Activated T-helper 1 cell treated with anti-CD3 and anti-CD28 coated beads, Interleukin-12 subunit alpha, Interleukin-12 subunit beta, Interleukin-2, Interleukin-4 antibody, amounts not matched to agents 30 ng/mL and 10 ng/mL and 1 ng/mL, durations not matched to agents 14 hours and 24 hours and 36 hours (primary cell): ENCODE measurements at regions of chr1 and their contacts with region 1.

Region 1: DNA sequence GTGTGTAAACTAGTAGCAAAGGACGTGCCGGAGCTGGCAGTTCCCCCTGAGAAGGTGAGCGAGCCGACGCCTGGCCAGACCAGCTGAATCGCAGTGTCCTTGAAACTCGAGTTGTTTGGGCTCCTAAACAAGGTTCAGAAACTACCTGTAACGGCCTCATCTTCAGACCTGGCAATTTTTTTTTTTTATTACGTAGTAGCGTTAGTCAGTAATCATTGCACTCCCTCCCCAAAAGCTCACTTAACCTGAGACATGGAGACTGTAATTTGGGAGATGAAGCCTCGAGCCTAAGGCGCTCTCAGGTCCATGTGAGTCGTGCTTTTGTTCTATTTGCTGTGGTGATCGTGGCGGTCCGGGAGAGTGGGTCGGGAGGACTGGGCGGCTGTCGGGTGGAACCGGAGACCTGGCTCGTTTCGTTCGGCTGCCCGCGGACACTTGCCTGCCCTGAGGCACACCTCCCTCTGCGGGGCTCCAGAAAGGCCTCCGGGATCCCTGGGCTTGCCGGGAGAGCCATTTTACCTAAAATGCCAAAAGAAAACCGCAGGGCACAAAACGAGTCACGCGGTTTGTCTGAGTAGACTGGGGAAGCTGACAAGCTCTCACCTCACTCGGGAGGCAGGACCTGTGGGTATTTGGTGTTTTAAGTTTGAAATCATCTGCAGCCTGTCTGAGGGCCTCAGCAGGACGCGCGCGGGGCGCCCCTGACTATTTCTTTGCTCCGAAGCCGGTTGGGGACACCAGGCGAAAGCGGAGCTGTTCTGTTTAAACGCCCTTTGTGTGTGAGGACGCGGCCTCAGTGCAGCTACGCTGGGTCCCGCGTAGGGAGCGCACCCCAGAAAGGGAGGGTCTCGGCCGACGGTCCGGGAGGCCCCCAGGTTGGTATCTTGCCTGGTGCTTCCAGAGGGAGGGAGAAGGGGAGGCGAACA is 722 bp downstream of the LHX8 start:
- DNase-seq: no peak
- H3K4me3 Mint-ChIP-seq: peak overlapping the region; percentile 63
- H3K27ac Mint-ChIP-seq: no peak overlapping the region
- H3K4me1 Mint-ChIP-seq: peaks cover 15% of the 10 kb centered on the region
- H3K27me3 Mint-ChIP-seq: peaks cover 85% of the 10 kb centered on the region

Region 2: DNA sequence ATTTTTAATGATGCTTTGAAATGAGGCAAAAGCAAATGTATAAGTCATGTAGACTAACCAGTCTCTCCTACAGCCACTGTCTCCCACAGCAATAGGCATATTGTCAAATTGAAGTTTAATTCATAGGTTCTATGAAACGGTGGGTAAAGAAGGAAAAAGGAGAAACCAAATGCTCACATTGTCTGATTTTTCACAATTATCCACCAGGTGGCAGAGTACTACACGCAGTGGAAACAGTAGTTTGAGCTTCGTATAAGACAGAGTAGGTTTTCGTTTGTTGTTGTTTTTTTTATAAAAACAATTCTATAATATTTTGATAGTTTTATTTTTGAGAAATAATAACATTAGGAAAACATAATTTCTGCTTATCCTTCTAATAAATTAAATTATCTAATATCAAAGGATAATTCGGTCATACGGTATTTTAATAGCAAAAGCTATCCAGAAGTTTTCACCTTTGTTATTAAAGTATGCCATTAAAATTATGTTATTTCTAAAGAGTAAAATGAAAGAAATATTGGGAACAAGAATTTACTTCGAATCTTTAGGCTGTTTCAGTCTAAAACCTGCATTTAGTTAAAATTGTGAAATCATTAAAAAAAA is 362.9 kb before region 1 on chr1:
- intact Hi-C with region 1: loop called (anchors 10 kb)
- DNase-seq: no peak
- H3K4me3 Mint-ChIP-seq: no peak overlapping the region
- H3K27ac Mint-ChIP-seq: no peak overlapping the region
- H3K4me1 Mint-ChIP-seq: no peaks in the 10 kb centered on the region
- H3K27me3 Mint-ChIP-seq: no peaks in the 10 kb centered on the region

Region 3: DNA sequence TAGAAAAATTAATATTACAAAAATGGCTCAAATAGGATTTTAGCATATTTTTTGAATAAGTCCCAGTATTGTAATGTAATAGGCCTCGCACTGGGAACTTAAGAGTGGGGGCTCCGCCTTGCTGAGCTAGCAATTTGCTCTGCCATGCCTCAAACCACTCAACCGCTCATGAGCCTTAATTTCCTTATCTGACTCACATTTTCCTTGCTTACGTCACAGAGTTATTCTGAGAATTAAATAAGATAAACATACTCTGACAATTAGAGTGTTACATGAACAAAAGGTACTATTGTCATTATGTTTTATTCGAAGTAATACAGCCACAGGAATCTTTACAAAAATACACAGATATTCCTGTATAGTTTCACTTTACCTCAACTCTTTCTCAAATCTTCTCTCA is 367.9 kb after region 1 on chr1:
- intact Hi-C with region 1: no loop called
- DNase-seq: no peak
- H3K4me3 Mint-ChIP-seq: no peak overlapping the region
- H3K27ac Mint-ChIP-seq: no peak overlapping the region
- H3K4me1 Mint-ChIP-seq: no peaks in the 10 kb centered on the region
- H3K27me3 Mint-ChIP-seq: no peaks in the 10 kb centered on the region

Region 4: GRCh38 chr1:75615613-75616435 is 480.9 kb after region 1 on chr1:
- intact Hi-C with region 1: loop called (anchors 10 kb)
- DNase-seq: no peak
- H3K4me3 Mint-ChIP-seq: peak overlapping the region; percentile 41
- H3K27ac Mint-ChIP-seq: no peak overlapping the region
- H3K4me1 Mint-ChIP-seq: peaks cover 8% of the 10 kb centered on the region
- H3K27me3 Mint-ChIP-seq: peaks cover 56% of the 10 kb centered on the region